ENCODE measurements at regions of chr1 and their contacts with region 1.

Region 1: DNA sequence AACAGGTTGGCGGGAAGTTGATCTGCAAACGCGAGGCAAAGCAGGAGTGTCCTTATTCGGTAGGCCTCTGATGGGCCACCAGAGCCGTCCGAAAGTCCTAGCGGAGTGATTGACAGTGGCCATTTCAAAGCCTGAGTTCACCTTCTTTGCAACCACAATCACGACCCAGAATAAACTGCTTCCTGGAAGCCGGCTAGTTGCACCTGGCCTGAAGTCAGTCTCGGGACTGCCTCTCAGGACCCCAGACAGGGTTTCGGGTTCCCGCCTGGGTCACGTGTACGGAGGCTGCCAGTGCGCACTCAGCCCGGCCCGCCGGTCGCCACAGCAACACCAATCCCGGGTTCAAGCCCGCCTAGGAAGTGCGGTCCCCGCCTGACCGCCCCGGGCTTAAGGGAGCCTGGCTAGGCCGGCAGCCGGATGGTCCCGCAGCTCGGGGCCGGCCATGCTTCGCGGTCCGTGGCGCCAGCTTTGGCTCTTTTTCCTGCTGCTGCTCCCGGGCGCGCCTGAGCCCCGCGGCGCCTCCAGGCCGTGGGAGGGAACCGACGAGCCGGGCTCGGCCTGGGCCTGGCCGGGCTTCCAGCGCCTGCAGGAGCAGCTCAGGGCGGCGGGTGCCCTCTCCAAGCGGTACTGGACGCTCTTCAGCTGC is at the start of gene TOR3A:
- DNase-seq: peak; percentile 95 to 97
- ATAC-seq: peak; percentile 85 to 88
- H3K4me3 ChIP-seq: peak within 1 kb of the TSS; percentile 81 to 98 (median 87)
- H3K27ac ChIP-seq: peak within 1 kb of the TSS; percentile 93 to 97 (median 96)
- H3K4me1 ChIP-seq: peaks cover 17 to 18% of the 10 kb centered on the region in 2 donors
- H3K27me3 ChIP-seq: no peaks in the 10 kb centered on the region
- CTCF ChIP-seq: no peak
- POLR2A ChIP-seq: peak; percentile 95 to 97
- total RNA-seq, gene TOR3A: 19.2 to 78.6 (median 29.0) TPM

Region 2: GRCh38 chr1:178532392-178532791 is 549.4 kb before region 1 on chr1:
- in situ Hi-C with region 1: no loop called
- intact Hi-C with region 1: loop called (anchors 10 kb)
- DNase-seq: peak; percentile 54 to 72
- ATAC-seq: peak; percentile 35 to 60
- H3K4me3 ChIP-seq: no peak overlapping the region
- H3K27ac ChIP-seq: no peak overlapping the region
- H3K4me1 ChIP-seq: peaks cover 4 to 18% of the 10 kb centered on the region in 2 donors
- H3K27me3 ChIP-seq: no peaks in the 10 kb centered on the region
- CTCF ChIP-seq: peak; percentile 76 to 94 (median 88)
- POLR2A ChIP-seq: no peak

Region 3: GRCh38 chr1:179025125-179025974 is 56.5 kb before region 1 on chr1 and contains the start of gene FAM20B:
- in situ Hi-C with region 1: no loop called
- intact Hi-C with region 1: loop called (anchors 1 kb)
- DNase-seq: peak; percentile 91 to 94
- ATAC-seq: peak; percentile 79 to 86
- H3K4me3 ChIP-seq: peak within 1 kb of the TSS; percentile 77 to 99 (median 89)
- H3K27ac ChIP-seq: peak within 1 kb of the TSS; percentile 92 to 99 (median 98)
- H3K4me1 ChIP-seq: peaks cover 30 to 44% of the 10 kb centered on the region in 2 donors
- H3K27me3 ChIP-seq: no peaks in the 10 kb centered on the region
- CTCF ChIP-seq: peak in 1 of 5 experiments; percentile 25
- POLR2A ChIP-seq: no peak
- total RNA-seq, gene FAM20B: 19.7 to 43.7 (median 32.6) TPM

Region 4: GRCh38 chr1:179058487-179059483 is 23.0 kb before region 1 on chr1:
- in situ Hi-C with region 1: no loop called
- intact Hi-C with region 1: no loop called
- DNase-seq: no peak
- ATAC-seq: no peak
- H3K4me3 ChIP-seq: no peak overlapping the region
- H3K27ac ChIP-seq: peak overlapping the region in 1 of 4 donors; percentile 76
- H3K4me1 ChIP-seq: peaks cover 5% of the 10 kb centered on the region in 2 donors
- H3K27me3 ChIP-seq: no peaks in the 10 kb centered on the region
- CTCF ChIP-seq: no peak
- POLR2A ChIP-seq: no peak

Region 5: GRCh38 chr1:179190861-179191260 is 109.1 kb after region 1 on chr1:
- in situ Hi-C with region 1: loop called in 1 of 4 experiments (anchors 5 kb)
- intact Hi-C with region 1: loop called (anchors 1 kb)
- DNase-seq: no peak
- ATAC-seq: peak; percentile 12 to 32
- H3K4me3 ChIP-seq: no peak overlapping the region
- H3K27ac ChIP-seq: peak overlapping the region; percentile 49 to 60 (median 50)
- H3K4me1 ChIP-seq: peaks cover 11 to 13% of the 10 kb centered on the region in 2 donors
- H3K27me3 ChIP-seq: no peaks in the 10 kb centered on the region
- CTCF ChIP-seq: no peak
- POLR2A ChIP-seq: no peak

Region 6: DNA sequence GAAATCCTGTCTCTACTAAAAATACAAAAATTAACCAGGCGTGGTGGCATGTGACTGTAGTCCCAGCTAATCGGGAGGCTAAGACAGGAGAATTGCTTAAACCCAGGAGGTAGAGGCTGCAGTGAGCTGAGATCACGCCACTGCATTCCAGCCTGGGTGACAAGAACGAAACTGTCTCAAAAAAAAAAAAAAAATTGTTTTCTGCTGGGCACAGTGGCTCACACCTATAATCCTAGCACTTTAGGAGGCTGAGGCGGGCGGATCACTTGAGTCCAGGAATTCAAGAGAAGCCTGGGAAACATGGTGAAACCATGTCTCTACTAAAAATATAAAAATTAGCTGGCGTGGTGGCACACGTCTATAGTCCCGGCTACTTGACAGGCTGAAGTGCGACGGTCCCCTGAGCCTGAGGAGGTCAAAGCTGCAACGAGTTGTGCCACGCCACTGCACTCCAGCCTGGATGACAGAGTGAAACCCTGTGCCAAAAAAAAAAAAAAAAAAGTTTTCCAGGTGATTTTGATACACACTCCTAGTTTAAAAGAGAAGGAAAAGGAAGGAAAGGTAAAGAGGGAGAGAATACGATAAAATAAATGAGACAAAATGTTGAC is 116.0 kb after region 1 on chr1:
- in situ Hi-C with region 1: loop called in 1 of 4 experiments (anchors 5 kb)
- intact Hi-C with region 1: loop called (anchors 1 kb)
- DNase-seq: no peak
- ATAC-seq: no peak
- H3K4me3 ChIP-seq: no peak overlapping the region
- H3K27ac ChIP-seq: no peak overlapping the region
- H3K4me1 ChIP-seq: peaks cover 11 to 12% of the 10 kb centered on the region in 2 donors
- H3K27me3 ChIP-seq: no peaks in the 10 kb centered on the region
- CTCF ChIP-seq: no peak
- POLR2A ChIP-seq: no peak

Region 7: GRCh38 chr1:179293340-179294327 is 211.8 kb after region 1 on chr1 and contains the start of gene SOAT1:
- in situ Hi-C with region 1: no loop called
- intact Hi-C with region 1: loop called (anchors 2 kb)
- DNase-seq: peak; percentile 86 to 92
- ATAC-seq: peak; percentile 88 to 89
- H3K4me3 ChIP-seq: peak within 1 kb of the TSS; percentile 81 to 92 (median 86)
- H3K27ac ChIP-seq: peak within 1 kb of the TSS; percentile 87 to 91 (median 89)
- H3K4me1 ChIP-seq: peaks cover 6 to 7% of the 10 kb centered on the region in 2 donors
- H3K27me3 ChIP-seq: no peaks in the 10 kb centered on the region
- CTCF ChIP-seq: peak in 3 of 5 experiments; percentile 9 to 13 (median 12)
- POLR2A ChIP-seq: peak; percentile 75 to 90
- total RNA-seq, gene SOAT1: 5.2 to 11.7 (median 6.4) TPM

Region 8: GRCh38 chr1:179380299-179380698 is 298.5 kb after region 1 on chr1:
- in situ Hi-C with region 1: no loop called
- intact Hi-C with region 1: no loop called
- DNase-seq: no peak
- ATAC-seq: no peak
- H3K4me3 ChIP-seq: no peak overlapping the region
- H3K27ac ChIP-seq: no peak overlapping the region
- H3K4me1 ChIP-seq: no peaks in the 10 kb centered on the region
- H3K27me3 ChIP-seq: no peaks in the 10 kb centered on the region
- CTCF ChIP-seq: no peak
- POLR2A ChIP-seq: no peak

Region 9: GRCh38 chr1:179809506-179810366 is 727.9 kb after region 1 on chr1:
- in situ Hi-C with region 1: loop called in 1 of 4 experiments (anchors 25 kb)
- intact Hi-C with region 1: no loop called
- DNase-seq: no peak
- ATAC-seq: peak; percentile 45 to 58
- H3K4me3 ChIP-seq: no peak overlapping the region
- H3K27ac ChIP-seq: no peak overlapping the region
- H3K4me1 ChIP-seq: peaks cover 5 to 8% of the 10 kb centered on the region in 2 donors
- H3K27me3 ChIP-seq: peaks cover 4 to 9% (median 5%) of the 10 kb centered on the region in 3 donors
- CTCF ChIP-seq: peak; percentile 71 to 91 (median 83)
- POLR2A ChIP-seq: no peak

Measured in gastrocnemius medialis (tissue), 4 donors.